Activated naive CD4-positive, alpha-beta T cell treated with anti-CD3 and anti-CD28 coated beads for 36 hours (primary cell): ENCODE measurements at regions of chr9 and their contacts with region 1.

Region 1: GRCh38 chr9:33835625-33836260 is 18.8 kb downstream of the UBE2R2 start:
- DNase-seq: no peak
- H3K4me3 Mint-ChIP-seq: peak overlapping the region; percentile 8
- H3K27ac Mint-ChIP-seq: peak overlapping the region; percentile 51
- H3K4me1 Mint-ChIP-seq: peaks cover 46% of the 10 kb centered on the region
- H3K27me3 Mint-ChIP-seq: no peaks in the 10 kb centered on the region

Region 2: DNA sequence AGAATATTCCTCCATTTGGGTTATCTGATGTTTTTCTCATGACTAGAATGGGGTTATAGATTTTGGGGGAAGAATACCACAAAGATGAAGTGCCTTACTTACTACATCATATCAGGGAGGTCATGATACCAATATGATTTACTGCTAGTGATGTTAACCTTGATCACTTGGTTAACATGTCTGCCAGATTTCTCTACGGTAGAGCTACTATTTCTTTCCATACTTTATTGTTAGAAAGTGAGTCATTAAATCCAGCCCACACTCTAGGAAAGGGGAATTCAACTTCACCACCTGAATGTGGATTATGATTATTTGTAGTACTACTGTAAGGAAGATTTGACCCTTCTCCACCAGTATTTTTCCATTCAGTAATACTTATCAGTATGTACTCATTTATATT is 45.9 kb after region 1 on chr9:
- CTCF ChIA-PET with region 1: interaction called, 4 read pairs
- intact Hi-C with region 1: loop called (anchors 1 kb)
- DNase-seq: no peak
- H3K4me3 Mint-ChIP-seq: peak overlapping the region; percentile 30
- H3K27ac Mint-ChIP-seq: peak overlapping the region; percentile 90
- H3K4me1 Mint-ChIP-seq: peaks cover 60% of the 10 kb centered on the region
- H3K27me3 Mint-ChIP-seq: no peaks in the 10 kb centered on the region

Region 3: GRCh38 chr9:34046784-34047379 is 211.1 kb after region 1 on chr9:
- CTCF ChIA-PET with region 1: no interaction called
- intact Hi-C with region 1: no loop called
- DNase-seq: peak; percentile 19
- H3K4me3 Mint-ChIP-seq: peak overlapping the region; percentile 91
- H3K27ac Mint-ChIP-seq: no peak overlapping the region
- H3K4me1 Mint-ChIP-seq: peaks cover 33% of the 10 kb centered on the region
- H3K27me3 Mint-ChIP-seq: no peaks in the 10 kb centered on the region

Region 4: GRCh38 chr9:34072868-34073590 is 237.3 kb after region 1 on chr9:
- CTCF ChIA-PET with region 1: no interaction called
- intact Hi-C with region 1: no loop called
- DNase-seq: no peak
- H3K4me3 Mint-ChIP-seq: no peak overlapping the region
- H3K27ac Mint-ChIP-seq: no peak overlapping the region
- H3K4me1 Mint-ChIP-seq: no peaks in the 10 kb centered on the region
- H3K27me3 Mint-ChIP-seq: no peaks in the 10 kb centered on the region

Region 5: DNA sequence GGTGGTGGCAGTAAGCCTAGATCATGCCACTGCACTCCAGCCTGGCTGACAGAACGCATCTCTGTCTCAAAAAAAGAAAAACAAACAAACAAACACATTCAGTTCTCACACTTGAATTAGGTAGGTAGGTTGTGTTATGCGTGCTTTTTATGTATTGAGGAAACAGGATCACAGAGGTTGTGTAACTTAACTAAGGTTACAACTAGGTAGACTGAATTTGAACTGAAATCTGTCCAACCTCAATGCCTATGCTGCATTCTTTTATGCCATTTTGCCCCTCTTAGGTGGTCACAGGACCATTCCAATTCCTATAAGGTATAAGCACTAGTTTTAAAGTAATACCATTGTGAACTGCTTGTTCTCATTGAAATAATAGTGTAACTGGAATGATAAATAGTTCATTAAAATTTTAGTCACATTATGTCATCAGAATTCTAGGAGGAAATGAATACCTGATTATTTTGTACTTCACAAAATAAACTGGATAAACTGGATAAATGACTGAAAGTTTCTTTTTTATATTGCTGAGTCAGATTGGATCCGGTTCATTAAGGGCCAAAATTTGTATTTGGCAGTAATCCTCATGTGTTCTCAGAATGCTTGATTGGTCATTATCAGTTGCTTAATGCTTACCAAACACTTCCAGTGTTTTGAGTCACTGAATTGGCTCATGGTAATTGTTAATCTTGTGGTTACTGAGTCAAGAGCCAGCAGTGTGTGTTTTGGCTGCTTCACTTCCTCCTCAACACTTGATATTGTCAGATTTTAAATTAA is 350.2 kb after region 1 on chr9:
- CTCF ChIA-PET with region 1: no interaction called
- intact Hi-C with region 1: loop called (anchors 1 kb)
- DNase-seq: no peak
- H3K4me3 Mint-ChIP-seq: no peak overlapping the region
- H3K27ac Mint-ChIP-seq: no peak overlapping the region
- H3K4me1 Mint-ChIP-seq: peaks cover 30% of the 10 kb centered on the region
- H3K27me3 Mint-ChIP-seq: no peaks in the 10 kb centered on the region